ENCODE measurements at regions of chr19 and their contacts with region 1.

Region 1: DNA sequence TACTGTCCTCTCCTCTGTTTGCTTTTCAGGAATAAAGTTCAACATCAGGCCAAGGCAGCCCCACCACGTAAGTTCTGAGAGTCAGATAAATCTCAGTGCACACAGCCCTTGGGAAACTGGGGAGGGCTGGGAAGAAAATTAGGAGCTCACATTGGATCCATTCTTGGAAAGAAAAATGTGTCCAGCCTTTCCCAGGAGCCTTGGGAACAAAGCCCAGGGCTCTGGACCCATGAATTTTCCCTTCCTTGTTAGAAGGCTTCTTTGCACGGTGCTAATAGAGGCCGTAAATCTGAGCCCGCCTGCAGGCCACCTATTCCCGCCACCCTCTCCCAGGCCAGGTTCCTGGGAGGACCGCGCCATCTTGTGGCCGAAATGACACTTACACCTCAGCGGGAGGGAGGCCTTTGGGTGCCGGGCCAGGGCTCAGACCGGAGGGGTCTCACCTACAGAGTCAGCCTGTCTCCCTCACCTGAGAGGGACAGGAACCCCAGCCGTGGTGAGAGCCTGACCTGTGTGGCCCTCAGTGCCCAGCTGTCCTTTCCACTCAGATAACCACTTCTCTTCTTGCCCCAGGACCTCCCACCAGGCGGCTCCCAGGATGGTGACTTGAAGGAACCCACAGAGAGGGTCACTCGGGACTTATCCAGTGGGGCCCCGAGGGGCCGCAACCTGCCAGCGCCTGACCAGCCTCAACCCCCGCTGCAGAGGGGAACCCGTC is 25.1 kb upstream of the KCTD15 start:
- DNase-seq: peak; percentile 46 to 72
- H3K4me3 ChIP-seq: no peak overlapping the region
- H3K27ac ChIP-seq: no peak overlapping the region
- H3K4me1 ChIP-seq: no peaks in the 10 kb centered on the region
- H3K27me3 ChIP-seq: peaks cover 49% of the 10 kb centered on the region
- CTCF ChIP-seq: peak; percentile 89

Region 2: DNA sequence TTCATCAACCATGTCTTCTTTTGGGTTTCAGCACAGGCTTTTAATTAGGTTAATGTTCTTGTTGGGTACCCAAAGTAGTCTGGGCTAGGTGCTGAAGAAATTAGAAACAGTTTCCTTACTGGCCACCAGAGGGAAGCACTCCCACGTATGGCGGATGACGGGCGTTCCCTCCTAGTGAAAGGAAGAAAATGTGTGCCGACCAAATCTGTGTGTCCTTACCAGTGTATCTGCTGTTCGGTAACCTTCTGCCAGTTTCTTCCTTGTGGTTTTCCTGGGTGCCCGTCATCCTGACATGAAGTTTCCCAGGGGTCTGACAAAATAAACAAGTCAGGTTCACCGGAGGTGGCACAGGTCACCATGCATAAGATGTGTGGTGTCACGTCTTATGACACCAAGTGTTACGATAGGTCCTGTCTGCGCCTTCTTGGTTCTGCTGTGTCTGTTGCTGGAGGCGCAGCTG is 645.6 kb before region 1 on chr19:
- CTCF ChIA-PET with region 1: no interaction called
- POLR2A ChIA-PET with region 1: no interaction called
- intact Hi-C with region 1: loop called (anchors 5 kb)
- DNase-seq: peak; percentile 45 to 48
- H3K4me3 ChIP-seq: no peak overlapping the region
- H3K27ac ChIP-seq: no peak overlapping the region
- H3K4me1 ChIP-seq: no peaks in the 10 kb centered on the region
- H3K27me3 ChIP-seq: no peaks in the 10 kb centered on the region
- CTCF ChIP-seq: peak; percentile 86

Region 3: DNA sequence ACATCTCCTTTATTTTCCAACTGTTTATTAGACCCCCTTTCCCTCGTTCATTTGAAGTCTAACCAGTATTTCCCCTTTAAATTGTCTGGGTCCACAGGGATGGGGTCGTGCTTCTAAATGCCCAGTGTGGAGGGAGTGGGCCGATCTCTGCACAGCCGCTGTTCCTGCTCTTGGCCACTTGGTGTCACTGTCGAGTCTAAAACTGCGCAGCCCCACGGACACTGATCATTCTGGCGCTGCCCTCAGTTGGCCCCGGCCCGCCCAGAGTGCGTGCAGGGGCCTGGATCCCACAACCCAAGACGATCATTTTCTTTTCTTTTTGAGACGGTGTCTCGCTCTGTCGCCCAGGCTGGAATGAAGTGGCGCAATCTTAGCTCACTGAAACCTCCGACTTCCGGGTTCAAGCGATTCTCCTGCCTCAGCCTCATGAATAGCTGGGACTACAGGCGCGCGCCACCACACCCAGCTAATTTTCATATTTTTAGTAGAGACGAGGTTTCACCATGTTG is 627.6 kb before region 1 on chr19:
- CTCF ChIA-PET with region 1: no interaction called
- POLR2A ChIA-PET with region 1: no interaction called
- intact Hi-C with region 1: loop called (anchors 5 kb)
- DNase-seq: peak in 1 of 2 experiments; percentile 48
- H3K4me3 ChIP-seq: no peak overlapping the region
- H3K27ac ChIP-seq: no peak overlapping the region
- H3K4me1 ChIP-seq: no peaks in the 10 kb centered on the region
- H3K27me3 ChIP-seq: no peaks in the 10 kb centered on the region
- CTCF ChIP-seq: peak; percentile 94

Region 4: GRCh38 chr19:33235269-33235995 is 536.1 kb before region 1 on chr19:
- CTCF ChIA-PET with region 1: no interaction called
- POLR2A ChIA-PET with region 1: no interaction called
- intact Hi-C with region 1: loop called (anchors 2 kb)
- DNase-seq: peak; percentile 61 to 79
- H3K4me3 ChIP-seq: no peak overlapping the region
- H3K27ac ChIP-seq: no peak overlapping the region
- H3K4me1 ChIP-seq: no peaks in the 10 kb centered on the region
- H3K27me3 ChIP-seq: peaks cover 21% of the 10 kb centered on the region
- CTCF ChIP-seq: peak; percentile 94

Region 5: DNA sequence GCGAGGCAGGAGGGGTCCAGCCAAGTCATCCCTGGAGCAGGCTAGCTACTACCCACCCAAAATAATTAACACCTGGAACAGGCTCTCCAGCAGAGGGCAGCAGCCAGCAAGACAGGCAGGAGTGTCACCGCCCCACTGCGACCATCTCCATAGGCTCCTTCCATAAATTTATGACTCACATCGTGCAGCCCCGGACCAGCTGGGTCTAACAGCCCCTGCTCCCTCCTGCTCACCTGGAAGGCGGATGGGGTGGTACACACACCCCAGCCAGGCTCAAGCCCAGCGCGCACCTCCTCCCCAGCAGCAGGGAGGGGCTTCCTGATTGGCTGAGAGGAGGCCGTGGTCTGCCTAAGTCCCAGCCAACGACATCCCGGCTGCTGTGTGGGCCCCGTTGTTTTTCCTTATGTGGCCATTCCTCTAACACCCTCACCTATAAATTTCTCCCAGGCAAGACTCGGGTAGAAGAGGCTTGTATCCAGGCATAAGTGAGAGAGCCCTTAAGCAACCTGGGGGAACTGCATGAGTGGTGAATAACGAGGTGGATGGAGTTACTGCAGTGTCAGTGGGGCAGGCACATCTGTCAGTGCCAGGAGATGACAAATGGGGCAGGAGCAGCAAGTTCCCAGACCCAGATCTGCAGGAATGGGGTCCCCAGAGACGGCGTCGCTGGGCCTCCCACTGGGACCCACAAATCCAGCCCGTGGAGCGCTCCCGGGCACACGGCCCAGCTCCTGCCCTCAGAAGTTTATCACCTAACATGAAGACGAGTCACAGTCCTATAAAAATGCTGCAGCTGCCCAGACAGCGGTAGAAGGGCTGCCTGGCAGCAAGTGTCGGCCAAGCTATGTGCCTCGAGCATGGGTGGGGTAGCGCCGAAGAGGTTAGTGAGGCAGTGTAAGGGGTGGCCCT is 355.0 kb before region 1 on chr19:
- CTCF ChIA-PET with region 1: interaction called, 7 read pairs
- POLR2A ChIA-PET with region 1: no interaction called
- intact Hi-C with region 1: loop called (anchors 1 kb)
- DNase-seq: peak; percentile 47 to 72
- H3K4me3 ChIP-seq: no peak overlapping the region
- H3K27ac ChIP-seq: no peak overlapping the region
- H3K4me1 ChIP-seq: no peaks in the 10 kb centered on the region
- H3K27me3 ChIP-seq: no peaks in the 10 kb centered on the region
- CTCF ChIP-seq: peak; percentile 83

Region 6: GRCh38 chr19:33430674-33431277 is 340.8 kb before region 1 on chr19:
- CTCF ChIA-PET with region 1: interaction called, 6 read pairs
- POLR2A ChIA-PET with region 1: no interaction called
- intact Hi-C with region 1: loop called (anchors 1 kb)
- DNase-seq: peak; percentile 63 to 65
- H3K4me3 ChIP-seq: no peak overlapping the region
- H3K27ac ChIP-seq: no peak overlapping the region
- H3K4me1 ChIP-seq: no peaks in the 10 kb centered on the region
- H3K27me3 ChIP-seq: no peaks in the 10 kb centered on the region
- CTCF ChIP-seq: peak; percentile 90

Region 7: GRCh38 chr19:33815380-33816340 is 44.1 kb after region 1 on chr19:
- CTCF ChIA-PET with region 1: no interaction called
- POLR2A ChIA-PET with region 1: no interaction called
- intact Hi-C with region 1: no loop called
- DNase-seq: no peak
- H3K4me3 ChIP-seq: no peak overlapping the region
- H3K27ac ChIP-seq: no peak overlapping the region
- H3K4me1 ChIP-seq: peaks cover 21% of the 10 kb centered on the region
- H3K27me3 ChIP-seq: no peaks in the 10 kb centered on the region
- CTCF ChIP-seq: no peak

Region 8: DNA sequence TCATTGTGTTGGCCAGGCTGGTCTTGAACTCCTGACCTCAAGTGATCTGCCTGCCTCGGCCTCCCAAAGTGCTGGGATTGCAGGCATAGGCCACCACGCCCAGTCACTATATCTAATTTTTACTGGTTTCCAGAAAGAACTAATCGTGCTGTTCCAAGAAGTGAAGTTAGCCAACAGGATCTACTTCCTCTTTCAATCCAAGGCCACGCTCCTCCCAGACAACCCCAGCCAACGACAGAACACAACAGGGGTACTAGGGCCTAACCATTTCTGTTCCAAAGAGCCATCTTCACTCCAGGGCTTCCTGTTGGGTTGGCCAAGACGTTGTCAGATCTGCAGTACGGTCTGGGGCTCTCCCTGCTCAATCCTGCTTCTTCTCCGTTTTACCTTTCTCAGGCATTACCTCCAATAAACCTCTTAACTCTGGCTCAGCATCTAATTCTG is 393.8 kb after region 1 on chr19:
- CTCF ChIA-PET with region 1: no interaction called
- POLR2A ChIA-PET with region 1: no interaction called
- intact Hi-C with region 1: no loop called
- DNase-seq: no peak
- H3K4me3 ChIP-seq: no peak overlapping the region
- H3K27ac ChIP-seq: no peak overlapping the region
- H3K4me1 ChIP-seq: no peaks in the 10 kb centered on the region
- H3K27me3 ChIP-seq: no peaks in the 10 kb centered on the region
- CTCF ChIP-seq: no peak

Region 9: DNA sequence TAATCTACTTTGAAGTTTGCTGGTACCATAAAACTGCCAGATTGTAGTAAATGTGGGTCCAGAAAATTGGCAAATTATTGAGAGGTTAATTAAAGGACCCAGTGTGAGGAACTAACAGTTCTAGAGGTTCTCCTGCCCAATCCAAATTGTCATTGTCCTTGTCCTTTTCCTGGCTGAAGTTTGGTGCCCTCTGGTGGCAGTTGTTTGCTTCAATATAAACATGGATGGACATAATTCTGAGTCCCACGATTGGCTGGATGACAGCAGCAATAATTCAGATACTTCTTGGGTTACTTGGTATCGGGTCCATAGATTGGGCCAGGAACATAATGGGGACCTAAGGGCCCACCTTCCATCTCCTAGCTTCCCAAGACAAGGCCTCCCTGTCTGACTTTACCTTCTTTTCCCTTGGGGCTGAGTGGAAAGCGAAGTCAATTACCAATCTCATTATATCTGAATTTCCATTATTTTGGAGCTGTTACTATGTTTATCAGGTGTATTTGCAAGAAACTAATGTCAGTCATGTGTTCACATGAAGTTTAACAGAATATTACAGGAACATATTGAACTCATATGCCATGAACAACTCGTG is 449.0 kb after region 1 on chr19:
- CTCF ChIA-PET with region 1: no interaction called
- POLR2A ChIA-PET with region 1: interaction called, 12 read pairs
- intact Hi-C with region 1: no loop called
- DNase-seq: peak in 1 of 2 experiments; percentile 40
- H3K4me3 ChIP-seq: no peak overlapping the region
- H3K27ac ChIP-seq: no peak overlapping the region
- H3K4me1 ChIP-seq: peaks cover 24% of the 10 kb centered on the region
- H3K27me3 ChIP-seq: no peaks in the 10 kb centered on the region
- CTCF ChIP-seq: peak; percentile 85